Posterior vena cava (tissue), 2 donors: ENCODE measurements at regions of chr1 and their contacts with region 1.

Region 1: DNA sequence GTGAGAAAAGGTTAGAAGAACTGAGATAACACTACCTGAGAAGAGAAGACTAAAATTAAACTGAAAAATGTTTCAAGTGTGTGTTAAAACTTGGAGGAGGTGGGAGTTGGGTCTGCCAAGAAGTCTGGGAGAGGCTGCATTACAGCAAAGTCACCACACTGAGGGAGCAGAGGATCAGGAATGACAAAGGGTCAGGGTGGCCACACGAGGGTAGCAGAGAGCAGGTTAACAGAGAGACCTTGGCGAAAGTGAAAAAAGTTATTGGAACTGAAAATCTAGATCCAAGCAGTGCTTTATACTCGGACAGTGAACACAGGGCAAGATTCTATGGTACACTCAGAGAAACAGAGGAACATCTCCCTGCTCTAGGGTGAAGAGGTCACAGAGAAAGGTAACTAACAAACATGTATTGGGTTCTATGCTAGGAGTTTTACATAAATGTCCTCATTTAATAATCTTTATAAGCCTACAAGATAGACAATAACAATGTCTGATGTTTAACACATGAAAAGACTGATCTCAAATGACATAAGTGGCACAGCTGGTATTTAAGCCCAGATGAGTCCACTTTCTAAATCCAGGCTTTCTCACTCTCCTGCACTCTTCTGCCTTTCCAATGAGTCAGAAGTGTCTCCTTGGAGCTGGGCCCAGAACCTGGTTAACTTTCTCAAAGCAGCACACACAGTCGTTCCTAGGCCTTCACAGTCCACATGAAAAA is 10.3 kb upstream of the CADM3 start:
- DNase-seq: peak; percentile 89

Region 2: DNA sequence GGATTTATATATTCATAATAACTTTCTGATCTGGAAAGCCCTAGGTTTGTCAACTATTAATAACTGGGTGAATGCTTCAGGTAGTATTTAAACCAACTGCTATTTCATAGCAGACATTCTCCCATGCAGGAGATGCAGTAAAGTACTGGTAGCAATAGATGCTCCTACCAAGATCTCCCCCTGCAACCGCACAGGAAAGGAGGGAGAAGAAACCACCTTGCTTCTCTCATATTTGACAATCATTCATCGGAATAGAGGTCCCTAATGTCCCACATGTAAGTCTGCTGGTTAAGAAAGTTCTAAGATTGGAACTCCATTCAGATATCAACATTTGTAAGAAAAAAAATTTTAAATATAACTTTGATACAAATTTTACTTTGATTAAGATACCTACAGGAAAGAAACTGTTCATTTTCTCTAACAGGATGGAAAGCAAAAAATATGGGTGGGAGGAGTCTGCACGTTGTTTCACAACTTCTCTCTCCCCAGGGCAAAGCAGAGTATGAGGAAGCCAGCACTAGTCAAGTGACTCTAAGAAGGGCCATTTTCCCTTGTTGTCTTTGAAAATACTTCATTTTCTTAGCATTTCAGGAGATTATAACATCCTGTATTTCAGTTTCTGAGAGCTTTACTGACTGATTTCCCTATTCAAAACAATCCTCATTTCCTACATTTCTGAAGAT is 230.0 kb before region 1 on chr1 and contains the start of gene PYHIN1:
- intact Hi-C with region 1: no loop called
- DNase-seq: no peak
- total RNA-seq, gene PYHIN1: 1.6 to 3.4 TPM

Region 3: GRCh38 chr1:159113596-159114433 is 47.3 kb before region 1 on chr1:
- intact Hi-C with region 1: no loop called
- DNase-seq: no peak

Region 4: DNA sequence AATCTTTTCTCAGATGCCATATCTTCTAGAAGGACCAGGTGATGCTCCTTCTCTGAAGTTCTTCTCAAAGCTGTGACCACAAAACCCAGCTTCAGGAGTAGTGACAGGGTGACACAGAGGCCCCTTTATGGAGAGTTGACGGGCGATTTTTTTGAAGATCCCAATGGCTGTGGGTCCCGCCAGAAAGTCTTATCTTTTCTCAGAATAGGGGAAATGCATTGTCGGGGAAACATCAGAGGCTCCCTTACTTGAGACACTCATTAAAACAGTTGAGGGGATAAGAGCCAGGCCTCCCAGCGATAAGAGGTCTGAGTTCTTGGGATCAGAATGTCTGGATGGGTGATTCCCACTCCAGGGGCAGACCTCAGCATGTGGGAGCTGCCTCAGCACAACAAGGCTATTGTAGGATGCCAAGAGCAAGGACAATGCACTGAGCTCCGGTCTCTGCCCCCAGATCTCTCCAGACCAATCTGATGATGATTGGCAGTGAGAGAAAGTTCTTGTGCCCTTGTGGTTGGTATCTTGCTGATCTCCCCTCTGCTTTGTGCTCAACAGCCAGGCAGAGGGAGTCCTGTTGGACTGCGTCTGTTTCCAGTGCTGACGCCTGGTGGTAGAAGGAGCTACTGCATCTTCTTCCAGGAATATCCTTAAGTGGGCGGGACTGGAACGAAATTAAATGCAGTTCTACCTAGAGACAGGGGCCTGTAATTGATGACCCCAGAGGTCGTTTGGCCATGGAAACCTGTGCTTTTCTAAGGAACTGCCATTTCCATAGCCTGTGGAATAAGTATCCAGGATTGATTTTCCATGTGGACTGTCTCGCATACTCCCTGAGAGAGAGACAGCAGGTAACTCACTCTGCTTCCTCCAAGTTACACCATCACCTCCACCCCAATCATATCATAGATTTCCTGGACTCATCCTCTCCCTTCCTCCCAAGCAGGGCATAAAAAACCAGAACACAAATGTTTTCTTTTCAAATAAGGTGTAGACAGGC is 36.7 kb after region 1 on chr1:
- intact Hi-C with region 1: loop called in 1 of 2 experiments (anchors 5 kb)
- DNase-seq: no peak